ENCODE measurements at regions of chr2 and their contacts with region 1.

Region 1: DNA sequence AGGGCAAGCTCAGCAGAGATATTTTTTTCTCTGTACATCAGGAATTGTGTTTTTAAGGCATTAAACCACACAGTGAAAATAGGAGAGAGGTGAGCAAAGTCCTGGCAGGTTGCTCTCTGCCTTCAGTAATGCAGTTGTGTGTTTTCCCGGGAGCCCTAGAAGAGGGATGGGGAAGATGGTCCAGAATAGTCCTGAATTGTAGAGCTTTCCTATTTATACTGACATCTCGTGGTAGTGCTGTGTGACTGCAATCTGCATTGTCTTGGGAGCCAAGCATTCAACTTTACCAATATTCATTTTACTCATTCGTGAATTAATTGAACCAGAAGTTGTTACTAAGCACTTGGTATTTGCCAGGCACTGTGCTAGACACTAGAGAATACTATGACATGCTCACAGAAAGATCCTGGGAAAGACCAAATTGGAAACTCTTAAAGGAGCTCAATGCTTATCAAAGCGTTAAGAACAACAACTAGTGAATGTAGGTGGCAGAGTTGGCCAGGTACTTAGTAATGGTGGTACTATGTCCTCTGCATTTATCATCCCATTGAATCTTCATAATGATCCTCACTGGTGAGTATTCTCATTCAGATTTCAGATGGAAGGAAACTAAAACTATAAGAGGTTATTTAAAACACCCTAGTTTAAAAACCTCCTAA is 214.6 kb downstream of the TRIB2 start:
- DNase-seq: peak; percentile 72
- H3K4me3 ChIP-seq: no peak overlapping the region
- H3K27ac ChIP-seq: no peak overlapping the region
- H3K4me1 ChIP-seq: peaks cover 33% of the 10 kb centered on the region
- H3K27me3 ChIP-seq: no peaks in the 10 kb centered on the region
- CTCF ChIP-seq: peak; percentile 94

Region 2: DNA sequence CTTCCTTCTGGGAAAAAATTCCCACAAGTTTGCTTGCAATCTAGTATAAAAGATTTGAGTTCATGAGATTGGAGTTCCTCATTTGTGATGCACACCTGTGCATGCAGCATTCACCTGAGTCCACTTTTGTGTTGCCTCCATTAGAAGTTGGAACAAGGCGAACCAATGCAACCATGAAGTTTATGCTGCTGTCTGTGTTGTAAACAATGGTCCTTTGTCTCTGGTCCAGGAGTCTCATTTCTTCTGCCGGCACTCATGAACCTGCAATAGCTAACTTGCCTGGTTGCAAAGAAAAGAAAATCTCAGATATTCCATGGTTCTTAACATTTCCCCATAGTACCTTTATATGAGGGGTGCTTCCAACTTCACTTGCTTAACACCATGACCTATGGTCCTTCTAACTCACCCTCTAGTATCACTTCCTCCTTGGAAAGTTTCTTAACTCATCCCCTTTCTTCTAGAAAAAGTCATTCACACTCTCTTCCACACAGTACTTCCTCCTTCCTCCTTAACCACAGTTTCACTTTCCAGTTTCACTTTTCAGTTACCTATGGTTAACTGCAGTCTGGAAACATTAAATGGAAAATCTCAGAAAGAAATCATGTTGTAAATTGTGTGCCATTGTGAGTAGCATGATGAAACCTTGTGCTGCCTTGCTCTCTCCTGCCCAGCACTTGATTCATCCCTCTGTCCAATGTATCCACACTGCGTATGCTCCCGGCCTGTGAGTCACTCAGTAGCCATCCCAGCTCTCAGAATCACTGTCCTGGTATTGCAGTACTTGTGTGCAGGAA is 343.4 kb before region 1 on chr2:
- CTCF ChIA-PET with region 1: no interaction called
- POLR2A ChIA-PET with region 1: no interaction called
- intact Hi-C with region 1: no loop called
- DNase-seq: no peak
- H3K4me3 ChIP-seq: no peak overlapping the region
- H3K27ac ChIP-seq: no peak overlapping the region
- H3K4me1 ChIP-seq: peaks cover 8% of the 10 kb centered on the region
- H3K27me3 ChIP-seq: no peaks in the 10 kb centered on the region
- CTCF ChIP-seq: no peak

Region 3: DNA sequence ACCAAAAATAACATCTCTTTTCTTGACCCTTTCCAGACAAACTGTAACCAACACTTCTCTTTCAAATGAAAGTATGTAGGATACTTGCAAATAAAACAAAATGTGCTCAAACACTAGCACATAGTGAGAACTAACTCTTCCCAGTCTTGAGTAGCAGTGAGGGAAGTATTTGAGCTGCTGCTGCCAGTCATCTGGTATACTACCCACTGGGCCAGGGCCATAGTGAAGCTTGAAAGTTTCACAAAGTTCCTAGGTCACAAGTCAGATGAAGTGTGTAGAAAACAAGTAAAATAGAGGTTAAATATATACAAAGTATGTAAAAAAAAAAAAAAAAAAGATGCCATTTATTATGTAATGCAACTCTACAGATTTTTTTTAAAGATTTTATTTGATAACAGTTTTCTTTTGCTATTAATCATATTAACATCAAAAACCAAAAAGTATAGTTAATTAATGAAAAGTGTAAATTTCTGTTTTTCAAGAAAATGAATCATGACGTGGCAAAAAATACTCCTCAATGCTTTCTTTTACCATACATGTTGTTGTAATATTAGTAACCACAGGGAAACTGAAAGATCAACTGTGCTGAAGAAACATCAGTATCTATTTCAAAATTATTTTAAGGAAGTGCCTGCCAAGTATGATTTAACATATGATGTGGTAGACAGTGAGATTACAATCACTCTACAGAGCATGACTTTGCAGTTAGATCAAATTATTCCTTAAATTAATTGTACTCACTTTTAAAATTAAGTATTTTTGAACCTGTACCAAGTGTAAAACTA is 236.1 kb before region 1 on chr2:
- CTCF ChIA-PET with region 1: no interaction called
- POLR2A ChIA-PET with region 1: interaction called, 14 read pairs
- intact Hi-C with region 1: no loop called
- DNase-seq: no peak
- H3K4me3 ChIP-seq: no peak overlapping the region
- H3K27ac ChIP-seq: no peak overlapping the region
- H3K4me1 ChIP-seq: no peaks in the 10 kb centered on the region
- H3K27me3 ChIP-seq: no peaks in the 10 kb centered on the region
- CTCF ChIP-seq: no peak

Region 4: DNA sequence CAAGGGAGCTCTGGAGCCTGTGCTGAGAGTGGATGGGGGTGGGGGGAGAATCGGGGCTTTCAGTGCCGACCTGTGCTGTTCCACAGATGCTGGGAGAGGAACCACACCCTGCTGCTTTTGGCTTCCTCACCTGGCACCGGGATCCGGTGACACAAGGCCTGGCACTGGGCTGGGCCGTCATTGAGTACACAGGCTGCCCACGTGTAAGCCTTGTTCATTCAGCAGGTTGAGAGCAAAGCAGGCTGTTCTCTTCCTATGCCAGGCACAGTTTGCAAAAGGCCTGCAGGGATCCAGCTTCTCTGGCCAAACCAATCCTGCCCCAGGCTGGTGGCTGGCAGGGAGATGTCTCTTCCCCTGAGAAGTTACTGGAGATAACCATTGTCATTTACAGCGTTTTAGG is 197.5 kb before region 1 on chr2:
- CTCF ChIA-PET with region 1: interaction called, 3 read pairs
- POLR2A ChIA-PET with region 1: no interaction called
- intact Hi-C with region 1: loop called (anchors 5 kb)
- DNase-seq: no peak
- H3K4me3 ChIP-seq: no peak overlapping the region
- H3K27ac ChIP-seq: no peak overlapping the region
- H3K4me1 ChIP-seq: no peaks in the 10 kb centered on the region
- H3K27me3 ChIP-seq: no peaks in the 10 kb centered on the region
- CTCF ChIP-seq: no peak

Region 5: GRCh38 chr2:12769492-12770105 is 161.7 kb before region 1 on chr2:
- CTCF ChIA-PET with region 1: no interaction called
- POLR2A ChIA-PET with region 1: no interaction called
- intact Hi-C with region 1: loop called (anchors 5 kb)
- DNase-seq: no peak
- H3K4me3 ChIP-seq: no peak overlapping the region
- H3K27ac ChIP-seq: no peak overlapping the region
- H3K4me1 ChIP-seq: peaks cover 15% of the 10 kb centered on the region
- H3K27me3 ChIP-seq: peaks cover 36% of the 10 kb centered on the region
- CTCF ChIP-seq: no peak

Region 6: DNA sequence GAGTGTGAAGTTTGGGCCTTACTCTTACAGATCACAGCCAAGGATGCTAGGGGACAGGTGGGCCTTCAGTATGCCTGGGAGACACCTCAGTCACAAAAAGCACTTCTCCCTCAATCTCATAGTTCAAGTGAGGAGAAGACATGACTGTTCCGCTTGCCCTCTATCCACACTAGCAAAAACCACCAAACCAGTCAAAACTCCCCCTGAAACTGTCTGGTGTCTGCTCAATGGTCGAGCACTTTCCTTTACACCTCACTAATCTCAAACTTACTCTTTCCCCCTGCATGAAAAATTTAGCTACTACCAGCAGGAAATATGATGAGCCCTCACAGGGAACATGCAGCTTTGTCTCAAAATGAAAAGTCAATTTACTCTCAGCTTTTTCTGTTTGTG is 17.6 kb after region 1 on chr2:
- CTCF ChIA-PET with region 1: no interaction called
- POLR2A ChIA-PET with region 1: no interaction called
- intact Hi-C with region 1: no loop called
- DNase-seq: no peak
- H3K4me3 ChIP-seq: no peak overlapping the region
- H3K27ac ChIP-seq: no peak overlapping the region
- H3K4me1 ChIP-seq: peaks cover 15% of the 10 kb centered on the region
- H3K27me3 ChIP-seq: no peaks in the 10 kb centered on the region
- CTCF ChIP-seq: no peak

Region 7: GRCh38 chr2:13021470-13021957 is 90.2 kb after region 1 on chr2:
- CTCF ChIA-PET with region 1: no interaction called
- POLR2A ChIA-PET with region 1: no interaction called
- intact Hi-C with region 1: no loop called
- DNase-seq: peak; percentile 64
- H3K4me3 ChIP-seq: no peak overlapping the region
- H3K27ac ChIP-seq: no peak overlapping the region
- H3K4me1 ChIP-seq: peaks cover 10% of the 10 kb centered on the region
- H3K27me3 ChIP-seq: peaks cover 8% of the 10 kb centered on the region
- CTCF ChIP-seq: no peak

Measured in A673 (cell line).